B cell (primary cell): ENCODE measurements at regions of chr17 and their contacts with region 1.

Region 1: DNA sequence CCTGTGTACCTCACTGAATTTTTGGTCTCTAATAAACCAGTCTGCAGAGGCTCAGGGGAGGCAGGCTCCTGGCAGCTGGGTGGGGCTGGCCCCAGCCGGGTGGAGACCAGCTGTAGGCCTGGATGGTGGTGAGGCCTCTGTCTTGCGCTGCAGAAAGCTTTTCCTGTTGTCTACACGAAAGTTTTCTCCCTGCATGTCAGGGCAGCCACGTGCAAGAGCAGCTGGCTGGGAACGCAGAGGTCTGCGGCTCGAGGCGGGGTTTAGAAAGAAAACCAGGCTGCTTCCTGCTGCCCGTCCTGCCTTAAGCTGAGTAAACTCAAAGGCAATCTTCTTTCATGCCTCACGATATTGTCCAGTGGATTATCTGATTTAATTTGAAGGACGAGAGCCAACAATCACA is 2.4 kb downstream of the SERPINF1 start:
- DNase-seq: peak; percentile 69
- ATAC-seq: peak; percentile 95
- H3K4me3 ChIP-seq: peak overlapping the region in 1 of 5 experiments; percentile 36
- H3K4me3 Mint-ChIP-seq: peak overlapping the region; percentile 65
- H3K27ac ChIP-seq: peak overlapping the region; percentile 33 to 39
- H3K27ac Mint-ChIP-seq: peak overlapping the region; percentile 89
- H3K4me1 ChIP-seq: peaks cover 24 to 52% of the 10 kb centered on the region in 2 donors
- H3K4me1 Mint-ChIP-seq: peaks cover 38% of the 10 kb centered on the region
- H3K27me3 ChIP-seq: no peaks in the 10 kb centered on the region
- H3K27me3 Mint-ChIP-seq: no peaks in the 10 kb centered on the region
- CTCF ChIP-seq: no peak

Region 2: DNA sequence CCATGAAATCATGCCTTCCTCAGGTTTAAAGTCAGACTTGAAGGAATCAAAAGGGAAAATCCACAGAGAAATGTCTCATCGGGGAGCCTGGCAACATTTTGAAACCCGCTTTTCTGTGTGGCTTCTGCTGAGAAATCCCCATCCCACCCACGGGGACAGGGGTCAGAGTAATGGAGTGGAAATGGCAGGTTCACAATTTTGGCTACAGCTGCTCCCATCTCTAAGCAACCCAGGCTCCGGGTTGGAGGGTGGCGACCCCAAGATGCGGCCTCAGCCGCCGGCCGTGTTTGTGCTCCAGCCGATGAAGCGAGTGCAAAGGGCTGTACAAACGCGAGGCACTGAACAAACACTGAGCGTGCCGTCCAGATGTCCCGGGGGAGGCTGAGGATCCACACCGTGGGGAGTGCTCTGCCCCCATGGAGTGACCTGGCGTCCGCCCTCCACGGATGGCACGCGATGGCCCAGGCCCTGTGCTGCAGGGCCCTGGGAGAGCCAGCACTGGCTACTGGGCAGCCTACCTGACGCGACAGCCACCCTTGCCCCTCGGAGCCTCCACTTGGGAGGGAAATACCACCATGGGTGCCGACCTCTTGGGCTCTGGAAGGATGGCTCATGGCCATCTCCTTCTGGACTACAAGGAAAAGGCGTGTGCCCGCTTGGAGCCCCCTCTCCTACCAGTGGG is 157.8 kb before region 1 on chr17:
- CTCF ChIA-PET with region 1: no interaction called
- POLR2A ChIA-PET with region 1: no interaction called
- intact Hi-C with region 1: no loop called
- DNase-seq: peak; percentile 18
- ATAC-seq: no peak
- H3K4me3 ChIP-seq: no peak overlapping the region
- H3K4me3 Mint-ChIP-seq: peak overlapping the region; percentile 72
- H3K27ac ChIP-seq: no peak overlapping the region
- H3K27ac Mint-ChIP-seq: peak overlapping the region; percentile 83
- H3K4me1 ChIP-seq: peaks cover 0 to 19% of the 10 kb centered on the region in 2 donors
- H3K4me1 Mint-ChIP-seq: peaks cover 27% of the 10 kb centered on the region
- H3K27me3 ChIP-seq: no peaks in the 10 kb centered on the region
- H3K27me3 Mint-ChIP-seq: no peaks in the 10 kb centered on the region
- CTCF ChIP-seq: no peak

Region 3: GRCh38 chr17:1730328-1731193 is 33.7 kb before region 1 on chr17:
- CTCF ChIA-PET with region 1: interaction called, 6 read pairs
- POLR2A ChIA-PET with region 1: interaction called, 25 read pairs
- intact Hi-C with region 1: loop called (anchors 2 kb)
- DNase-seq: no peak
- ATAC-seq: no peak
- H3K4me3 ChIP-seq: no peak overlapping the region
- H3K4me3 Mint-ChIP-seq: no peak overlapping the region
- H3K27ac ChIP-seq: no peak overlapping the region
- H3K27ac Mint-ChIP-seq: peak overlapping the region; percentile 50
- H3K4me1 ChIP-seq: peaks cover 17 to 43% of the 10 kb centered on the region in 2 donors
- H3K4me1 Mint-ChIP-seq: peaks cover 53% of the 10 kb centered on the region
- H3K27me3 ChIP-seq: no peaks in the 10 kb centered on the region
- H3K27me3 Mint-ChIP-seq: no peaks in the 10 kb centered on the region
- CTCF ChIP-seq: no peak

Region 4: DNA sequence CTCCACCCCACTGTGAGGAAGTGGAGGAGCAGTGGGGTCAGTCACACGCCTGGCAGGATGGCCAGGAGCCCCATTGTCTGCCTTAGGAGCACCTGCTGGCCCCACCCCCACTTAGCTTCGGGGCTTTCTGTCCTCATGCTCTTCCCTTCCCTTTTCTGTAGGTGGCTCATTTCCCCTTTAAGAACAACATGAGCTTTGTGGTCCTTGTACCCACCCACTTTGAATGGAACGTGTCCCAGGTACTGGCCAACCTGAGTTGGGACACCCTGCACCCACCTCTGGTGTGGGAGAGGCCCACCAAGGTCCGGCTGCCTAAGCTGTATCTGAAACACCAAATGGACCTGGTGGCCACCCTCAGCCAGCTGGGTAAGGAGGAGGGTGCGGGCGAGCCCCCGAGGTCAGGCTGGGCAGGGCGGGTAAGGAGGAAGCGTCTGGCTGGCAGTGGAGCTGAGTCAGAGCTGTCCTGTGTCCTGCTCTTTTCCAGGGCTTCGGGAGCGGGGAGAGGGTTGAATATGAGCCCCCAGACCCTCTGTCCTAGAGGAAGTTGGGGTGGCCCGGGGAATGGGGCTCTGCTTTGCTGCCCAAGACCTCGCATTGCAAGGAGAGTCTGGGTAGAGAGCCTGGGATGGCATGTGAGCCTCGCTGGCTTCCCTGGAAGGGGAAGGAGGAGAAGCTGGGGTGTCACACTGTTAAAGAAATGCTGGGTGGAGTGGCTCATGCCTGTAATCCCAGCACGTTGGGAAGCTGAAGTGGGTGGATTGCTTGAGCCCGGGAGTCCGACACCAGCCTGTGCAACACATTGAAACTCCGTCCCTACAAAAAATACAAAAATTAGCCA is 11.6 kb before region 1 on chr17:
- CTCF ChIA-PET with region 1: interaction called, 16 read pairs
- POLR2A ChIA-PET with region 1: interaction called, 17 read pairs
- intact Hi-C with region 1: loop called (anchors 1 kb)
- DNase-seq: peak; percentile 75
- ATAC-seq: peak; percentile 82
- H3K4me3 ChIP-seq: peak overlapping the region in 2 of 5 experiments; percentile 17 to 21
- H3K4me3 Mint-ChIP-seq: peak overlapping the region; percentile 67
- H3K27ac ChIP-seq: peak overlapping the region in 1 of 2 donors; percentile 6
- H3K27ac Mint-ChIP-seq: peak overlapping the region; percentile 82
- H3K4me1 ChIP-seq: peaks cover 10 to 15% of the 10 kb centered on the region in 2 donors
- H3K4me1 Mint-ChIP-seq: peaks cover 15% of the 10 kb centered on the region
- H3K27me3 ChIP-seq: no peaks in the 10 kb centered on the region
- H3K27me3 Mint-ChIP-seq: no peaks in the 10 kb centered on the region
- CTCF ChIP-seq: no peak